Transverse colon (tissue), 4 donors: ENCODE measurements at regions of chr3 and their contacts with region 1.

Region 1: DNA sequence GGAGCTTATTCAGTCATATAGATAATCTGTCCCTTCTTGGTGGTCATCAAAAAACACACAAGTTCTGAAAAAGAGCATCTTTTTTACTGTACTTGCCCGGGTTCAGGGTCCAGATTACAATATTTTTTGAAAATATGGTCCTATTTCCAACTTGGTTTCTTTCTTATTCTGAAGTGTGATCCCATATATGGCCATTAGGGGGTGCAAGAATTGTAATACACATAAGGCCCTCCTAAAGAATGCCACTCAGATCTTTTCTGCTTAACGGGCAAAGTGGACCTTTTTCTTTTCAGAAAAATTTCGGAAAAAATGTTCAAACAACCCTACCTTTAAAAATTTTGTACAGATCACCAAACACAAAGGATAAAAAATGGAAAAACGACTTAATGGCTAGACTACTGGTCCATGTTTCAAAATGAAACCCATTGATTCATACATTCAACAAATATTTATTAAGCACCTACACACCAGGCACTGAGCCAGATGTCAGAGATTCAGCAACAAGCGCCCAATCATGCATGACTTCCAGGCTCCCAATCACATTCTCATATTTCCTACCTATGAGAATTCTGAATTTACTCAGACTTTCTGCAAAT is 102.0 kb upstream of the MYRIP start:
- DNase-seq: no peak
- H3K4me3 ChIP-seq: no peak overlapping the region
- H3K27ac ChIP-seq: no peak overlapping the region
- H3K4me1 ChIP-seq: no peaks in the 10 kb centered on the region
- H3K27me3 ChIP-seq: no peaks in the 10 kb centered on the region
- CTCF ChIP-seq: peak; percentile 53 to 78 (median 63)
- EP300 ChIP-seq: no peak
- POLR2A ChIP-seq: no peak

Region 2: DNA sequence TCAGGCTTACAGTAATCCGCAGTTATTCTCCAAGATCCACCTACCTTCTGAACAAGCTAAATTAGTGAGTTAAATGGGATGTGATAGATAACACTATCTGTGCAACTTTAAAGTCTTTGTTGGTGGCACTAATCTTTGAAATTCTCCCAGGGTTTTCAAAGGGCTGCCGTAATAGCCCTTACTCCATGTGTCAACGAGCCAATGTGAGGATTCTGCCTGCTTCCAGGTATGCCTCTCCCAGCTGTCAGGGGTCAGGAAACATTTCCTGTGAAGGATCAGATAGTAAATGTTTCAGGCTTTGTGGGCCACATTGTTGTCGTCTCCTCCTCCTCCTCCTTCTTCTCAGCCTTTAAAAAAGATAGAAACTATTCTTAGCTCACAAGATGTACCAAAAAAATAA is 1037.7 kb before region 1 on chr3:
- in situ Hi-C with region 1: no loop called
- intact Hi-C with region 1: no loop called
- DNase-seq: no peak
- H3K4me3 ChIP-seq: no peak overlapping the region
- H3K27ac ChIP-seq: no peak overlapping the region
- H3K4me1 ChIP-seq: no peaks in the 10 kb centered on the region
- H3K27me3 ChIP-seq: peaks cover 10% of the 10 kb centered on the region
- CTCF ChIP-seq: no peak
- EP300 ChIP-seq: no peak
- POLR2A ChIP-seq: no peak

Region 3: DNA sequence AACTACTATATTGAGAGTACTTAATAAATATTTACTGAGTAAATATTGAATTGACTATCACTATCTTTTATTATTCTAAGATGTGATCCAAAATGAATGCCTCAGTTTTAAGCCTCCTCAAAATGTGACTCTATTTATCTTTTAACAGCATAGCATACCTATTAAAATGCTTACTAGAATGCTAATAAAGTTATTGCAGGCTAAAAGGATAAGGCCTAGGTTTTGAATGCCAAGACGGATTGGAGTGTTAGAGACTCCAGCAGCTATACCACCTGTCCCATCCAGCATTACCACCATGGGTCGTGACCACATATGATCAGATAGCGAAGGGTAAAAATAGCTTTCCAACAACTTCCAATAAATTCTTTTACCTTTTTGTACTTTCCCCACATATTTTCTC is 37.3 kb after region 1 on chr3:
- in situ Hi-C with region 1: no loop called
- intact Hi-C with region 1: no loop called
- DNase-seq: no peak
- H3K4me3 ChIP-seq: no peak overlapping the region
- H3K27ac ChIP-seq: no peak overlapping the region
- H3K4me1 ChIP-seq: no peaks in the 10 kb centered on the region
- H3K27me3 ChIP-seq: no peaks in the 10 kb centered on the region
- CTCF ChIP-seq: no peak
- EP300 ChIP-seq: no peak
- POLR2A ChIP-seq: no peak

Region 4: GRCh38 chr3:40179016-40179415 is 471.6 kb after region 1 on chr3:
- in situ Hi-C with region 1: loop called in 3 of 4 experiments (anchors 25 kb)
- intact Hi-C with region 1: no loop called
- DNase-seq: peak; percentile 78
- H3K4me3 ChIP-seq: no peak overlapping the region
- H3K27ac ChIP-seq: no peak overlapping the region
- H3K4me1 ChIP-seq: peaks cover 0 to 2% (median 0%) of the 10 kb centered on the region in 4 donors
- H3K27me3 ChIP-seq: no peaks in the 10 kb centered on the region
- CTCF ChIP-seq: peak; percentile 52 to 74 (median 68)
- EP300 ChIP-seq: no peak
- POLR2A ChIP-seq: no peak

Region 5: GRCh38 chr3:40885430-40885829 is 1178.0 kb after region 1 on chr3:
- in situ Hi-C with region 1: no loop called
- intact Hi-C with region 1: no loop called
- DNase-seq: no peak
- H3K4me3 ChIP-seq: no peak overlapping the region
- H3K27ac ChIP-seq: no peak overlapping the region
- H3K4me1 ChIP-seq: no peaks in the 10 kb centered on the region
- H3K27me3 ChIP-seq: no peaks in the 10 kb centered on the region
- CTCF ChIP-seq: no peak
- EP300 ChIP-seq: no peak
- POLR2A ChIP-seq: no peak